Activated naive CD4-positive, alpha-beta T cell treated with anti-CD3 and anti-CD28 coated beads for 36 hours (primary cell): ENCODE measurements at regions of chr17 and their contacts with region 1.

Region 1: GRCh38 chr17:58517734-58518609 is 3.5 kb upstream of the MTMR4 start:
- DNase-seq: peak; percentile 100
- H3K4me3 Mint-ChIP-seq: peak overlapping the region; percentile 95
- H3K27ac Mint-ChIP-seq: peak overlapping the region; percentile 95
- H3K4me1 Mint-ChIP-seq: peaks cover 38% of the 10 kb centered on the region
- H3K27me3 Mint-ChIP-seq: no peaks in the 10 kb centered on the region

Region 2: GRCh38 chr17:58006924-58007780 is 510.8 kb before region 1 on chr17 and contains the start of gene SRSF1:
- CTCF ChIA-PET with region 1: no interaction called
- intact Hi-C with region 1: loop called (anchors 1 kb)
- DNase-seq: peak; percentile 99
- H3K4me3 Mint-ChIP-seq: peak within 1 kb of the TSS; percentile 99
- H3K27ac Mint-ChIP-seq: peak within 1 kb of the TSS; percentile 100
- H3K4me1 Mint-ChIP-seq: peaks cover 39% of the 10 kb centered on the region
- H3K27me3 Mint-ChIP-seq: no peaks in the 10 kb centered on the region
- total RNA-seq, gene SRSF1: 248 to 257 TPM

Region 3: GRCh38 chr17:58337600-58338453 is 180.1 kb before region 1 on chr17:
- CTCF ChIA-PET with region 1: no interaction called
- intact Hi-C with region 1: loop called (anchors 2 kb)
- DNase-seq: peak; percentile 98
- H3K4me3 Mint-ChIP-seq: peak overlapping the region; percentile 92
- H3K27ac Mint-ChIP-seq: peak overlapping the region; percentile 99
- H3K4me1 Mint-ChIP-seq: peaks cover 7% of the 10 kb centered on the region
- H3K27me3 Mint-ChIP-seq: no peaks in the 10 kb centered on the region

Region 4: DNA sequence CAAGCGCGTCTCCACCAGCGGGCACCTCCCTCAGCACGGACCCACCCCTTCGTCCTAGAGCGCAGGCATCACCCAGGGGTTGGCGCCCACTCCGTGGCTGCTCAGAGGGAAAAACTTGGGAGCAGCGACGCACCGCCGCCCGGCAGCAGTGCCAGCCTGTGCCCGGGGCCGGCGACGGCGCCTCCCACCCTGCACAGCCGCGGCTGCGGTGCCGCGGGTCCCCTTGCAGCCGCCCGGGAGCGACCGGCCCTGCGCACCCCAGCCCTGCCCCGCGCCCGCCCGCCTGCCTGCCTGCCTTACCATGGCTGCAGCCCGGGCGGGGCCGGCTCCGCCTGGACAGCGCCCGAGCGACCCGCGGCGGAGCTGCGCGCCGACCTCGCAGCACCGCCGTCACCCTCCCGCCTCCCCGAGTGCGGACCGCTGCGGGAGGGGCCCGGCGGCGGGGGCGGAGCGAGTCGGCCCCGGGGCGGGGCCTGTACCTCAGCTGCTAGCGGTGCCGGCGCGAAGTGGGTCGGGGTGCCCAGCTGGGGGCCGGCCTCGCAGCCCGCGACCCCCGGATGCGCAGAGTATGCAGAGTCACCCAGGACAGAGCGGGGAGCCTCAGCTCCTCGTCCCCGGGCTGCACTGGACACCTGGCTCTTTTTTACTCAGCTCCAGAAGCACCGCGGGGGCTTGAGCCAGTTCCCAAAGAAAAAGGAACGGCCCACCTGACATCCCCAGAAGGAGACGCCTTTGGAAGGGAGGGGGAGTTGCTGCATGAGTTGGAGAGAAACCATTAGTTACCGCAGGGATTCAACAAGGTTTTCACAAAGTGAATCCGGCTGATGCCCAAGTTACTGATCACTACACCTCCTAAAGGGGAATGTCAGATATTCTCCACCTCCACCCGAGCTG is 13.9 kb after region 1 on chr17:
- CTCF ChIA-PET with region 1: interaction called, 7 read pairs
- intact Hi-C with region 1: loop called (anchors 1 kb)
- DNase-seq: peak; percentile 48
- H3K4me3 Mint-ChIP-seq: peak overlapping the region; percentile 30
- H3K27ac Mint-ChIP-seq: no peak overlapping the region
- H3K4me1 Mint-ChIP-seq: peaks cover 2% of the 10 kb centered on the region
- H3K27me3 Mint-ChIP-seq: peaks cover 14% of the 10 kb centered on the region

Region 5: GRCh38 chr17:58658804-58659713 is 141.1 kb after region 1 on chr17:
- CTCF ChIA-PET with region 1: interaction called, 3 read pairs
- intact Hi-C with region 1: loop called (anchors 1 kb)
- DNase-seq: peak; percentile 88
- H3K4me3 Mint-ChIP-seq: peak overlapping the region; percentile 69
- H3K27ac Mint-ChIP-seq: peak overlapping the region; percentile 98
- H3K4me1 Mint-ChIP-seq: peaks cover 16% of the 10 kb centered on the region
- H3K27me3 Mint-ChIP-seq: peaks cover 8% of the 10 kb centered on the region

Region 6: GRCh38 chr17:59106463-59107305 is 588.7 kb after region 1 on chr17 and contains the start of gene TRIM37:
- CTCF ChIA-PET with region 1: no interaction called
- intact Hi-C with region 1: loop called (anchors 1 kb)
- DNase-seq: peak; percentile 99
- H3K4me3 Mint-ChIP-seq: peak within 1 kb of the TSS; percentile 96
- H3K27ac Mint-ChIP-seq: peak within 1 kb of the TSS; percentile 89
- H3K4me1 Mint-ChIP-seq: peaks cover 54% of the 10 kb centered on the region
- H3K27me3 Mint-ChIP-seq: no peaks in the 10 kb centered on the region
- total RNA-seq, gene TRIM37: 19.9 to 24.1 TPM

Region 7: GRCh38 chr17:59565171-59565969 is 1047.4 kb after region 1 on chr17 and contains the start of gene DHX40:
- CTCF ChIA-PET with region 1: no interaction called
- intact Hi-C with region 1: loop called (anchors 5 kb)
- DNase-seq: peak; percentile 98
- H3K4me3 Mint-ChIP-seq: peak within 1 kb of the TSS; percentile 100
- H3K27ac Mint-ChIP-seq: peak within 1 kb of the TSS; percentile 98
- H3K4me1 Mint-ChIP-seq: peaks cover 21% of the 10 kb centered on the region
- H3K27me3 Mint-ChIP-seq: no peaks in the 10 kb centered on the region
- total RNA-seq, gene DHX40: 14.2 to 15.3 TPM